ENCODE measurements at regions of chr4 and their contacts with region 1.

Region 1: DNA sequence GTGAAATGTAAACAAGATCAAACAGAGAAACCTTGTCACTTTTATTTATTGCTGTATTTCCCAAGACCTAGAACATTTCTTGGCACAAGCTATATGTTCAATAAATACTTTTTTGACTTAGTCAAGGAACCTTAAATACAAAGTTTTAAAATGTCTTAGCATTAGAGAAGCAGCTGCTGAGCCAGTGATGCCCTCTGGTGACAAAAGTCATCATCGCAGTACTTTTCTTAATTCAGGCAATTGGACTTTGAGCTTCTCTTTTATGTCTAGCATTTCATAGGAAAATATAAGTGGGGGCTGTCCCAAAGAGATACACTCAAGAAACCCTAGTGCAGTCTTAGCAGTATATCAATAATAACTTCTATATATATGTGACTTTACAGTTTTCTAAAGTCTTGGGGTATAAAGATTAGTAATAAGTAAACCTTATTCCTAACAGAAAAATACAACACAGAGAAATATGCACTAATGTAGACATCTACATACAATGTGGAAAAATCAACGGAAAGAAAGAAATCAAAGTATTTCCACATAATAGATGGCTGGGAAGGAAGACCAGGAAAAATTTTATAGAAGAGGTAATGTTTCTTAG is 118.4 kb downstream of the DTHD1 start:
- DNase-seq: peak in 2 of 6 donors; percentile 8 to 36
- ATAC-seq: peak in 3 of 4 donors; percentile 72 to 79 (median 77)
- H3K4me3 ChIP-seq: no peak overlapping the region
- H3K27ac ChIP-seq: no peak overlapping the region
- H3K4me1 ChIP-seq: no peaks in the 10 kb centered on the region
- H3K27me3 ChIP-seq: no peaks in the 10 kb centered on the region
- CTCF ChIP-seq: peak in 3 of 4 donors; percentile 40 to 50 (median 48)

Region 2: DNA sequence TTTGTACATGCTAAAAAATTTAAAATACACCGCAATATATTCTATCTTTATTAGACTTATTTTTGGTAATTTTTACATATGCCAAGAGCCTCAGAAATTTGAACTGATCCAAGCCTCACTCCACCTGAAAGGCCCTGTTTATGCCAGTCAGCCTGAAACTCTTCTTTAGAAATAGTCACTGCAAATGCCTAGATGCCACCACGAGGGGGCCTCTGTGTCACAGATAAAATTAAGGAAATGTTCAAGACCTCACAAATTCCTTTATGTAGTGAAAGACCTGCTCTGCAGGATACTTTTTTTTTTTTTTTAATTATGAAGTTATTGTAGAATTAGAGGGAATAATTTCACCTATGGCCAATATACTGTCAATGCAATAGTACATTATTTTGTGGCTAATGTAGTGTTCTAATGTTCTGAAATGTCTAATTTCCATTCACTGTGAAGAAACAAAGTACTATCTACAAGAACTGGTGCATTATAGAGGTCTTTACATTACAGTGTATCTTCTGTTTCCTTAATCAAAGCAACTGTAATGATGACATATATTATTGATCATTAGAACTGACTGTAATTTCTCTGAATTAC is 48.7 kb before region 1 on chr4:
- intact Hi-C with region 1: loop called in 1 of 3 experiments (anchors 5 kb)
- DNase-seq: peak in 5 of 6 donors; percentile 41 to 74 (median 53)
- ATAC-seq: peak; percentile 74 to 92 (median 90)
- H3K4me3 ChIP-seq: no peak overlapping the region
- H3K27ac ChIP-seq: no peak overlapping the region
- H3K4me1 ChIP-seq: no peaks in the 10 kb centered on the region
- H3K27me3 ChIP-seq: no peaks in the 10 kb centered on the region
- CTCF ChIP-seq: peak; percentile 30 to 70 (median 62)

Measured in pancreas (tissue), 10 donors.